AG04449 (cell line): ENCODE measurements at regions of chr3 and their contacts with region 1.

Region 1: GRCh38 chr3:168165390-168166269 is 69.9 kb upstream of the GOLIM4 start:
- DNase-seq: peak; percentile 23
- H3K4me3 ChIP-seq: no peak overlapping the region
- CTCF ChIP-seq: peak; percentile 66

Region 2: GRCh38 chr3:168040607-168041208 is 124.9 kb before region 1 on chr3:
- CTCF ChIA-PET with region 1: interaction called, 276 read pairs
- POLR2A ChIA-PET with region 1: no interaction called
- DNase-seq: peak; percentile 36
- H3K4me3 ChIP-seq: no peak overlapping the region
- CTCF ChIP-seq: peak; percentile 64

Region 3: DNA sequence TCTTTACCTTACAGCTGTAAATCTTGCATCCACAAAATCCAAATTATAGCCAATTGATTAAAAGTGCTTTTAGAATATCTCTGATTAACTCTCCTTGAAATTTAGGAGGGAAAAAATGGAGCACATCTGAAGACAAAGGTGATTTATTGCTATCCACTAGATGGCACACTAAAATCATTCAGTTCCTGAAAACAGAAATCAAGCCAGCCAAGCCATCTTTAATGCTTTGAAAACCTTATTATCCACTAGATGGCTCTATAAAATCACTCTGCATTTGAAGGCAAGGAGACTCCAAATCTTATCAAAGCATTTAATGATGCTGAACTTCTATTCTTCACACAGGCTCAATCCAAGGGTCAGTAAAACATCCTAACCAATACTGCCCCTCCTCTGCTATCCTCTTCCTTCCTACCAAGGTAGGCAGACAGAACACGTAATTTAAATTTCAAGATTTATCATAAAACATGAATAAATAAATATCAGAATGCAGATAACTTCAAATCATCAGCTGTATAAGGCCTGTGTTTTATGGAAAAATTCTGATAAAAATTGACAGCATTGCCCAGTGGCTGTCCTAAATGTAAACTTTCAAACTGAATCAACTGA is 118.3 kb before region 1 on chr3:
- CTCF ChIA-PET with region 1: interaction called, 276 read pairs
- POLR2A ChIA-PET with region 1: no interaction called
- DNase-seq: no peak
- H3K4me3 ChIP-seq: no peak overlapping the region
- CTCF ChIP-seq: peak; percentile 49

Region 4: DNA sequence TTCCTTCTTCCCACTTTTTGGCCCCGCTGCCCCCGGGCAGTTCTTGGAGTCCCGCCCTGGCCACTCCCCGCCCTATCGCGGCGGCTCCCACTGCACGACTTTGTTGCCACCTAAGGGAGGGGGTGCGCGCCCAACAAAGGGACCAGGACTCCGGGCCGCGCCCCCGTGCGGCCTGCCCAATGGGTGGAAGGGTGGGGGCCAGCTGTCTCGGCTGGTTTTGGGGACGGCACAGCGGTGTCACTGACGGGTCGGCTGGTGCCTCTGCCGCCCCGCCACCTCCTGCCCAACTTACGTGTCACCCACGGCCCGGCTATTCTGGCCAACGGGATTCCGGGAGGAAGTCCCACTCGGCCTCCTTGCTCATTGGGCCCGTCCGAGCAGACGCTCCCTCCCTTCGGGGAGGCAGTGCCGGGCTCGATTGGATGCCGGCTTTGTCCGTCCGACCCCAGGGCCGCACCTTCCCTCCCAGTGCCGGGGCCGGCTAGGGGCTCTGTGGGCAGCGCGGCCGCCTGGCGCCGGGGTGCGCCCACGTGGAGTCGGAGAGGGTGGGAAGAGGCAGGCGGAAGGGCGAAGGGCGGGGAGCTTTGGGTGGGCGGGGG is 69.9 kb before region 1 on chr3 and contains the start of gene GOLIM4:
- CTCF ChIA-PET with region 1: interaction called, 20 read pairs
- POLR2A ChIA-PET with region 1: no interaction called
- DNase-seq: peak; percentile 85
- H3K4me3 ChIP-seq: peak within 1 kb of the TSS; percentile 96
- CTCF ChIP-seq: peak; percentile 7

Region 5: GRCh38 chr3:168100777-168101492 is 64.7 kb before region 1 on chr3:
- CTCF ChIA-PET with region 1: interaction called, 20 read pairs
- POLR2A ChIA-PET with region 1: no interaction called
- DNase-seq: no peak
- H3K4me3 ChIP-seq: no peak overlapping the region
- CTCF ChIP-seq: no peak

Region 6: GRCh38 chr3:168186293-168186983 is 20.8 kb after region 1 on chr3:
- CTCF ChIA-PET with region 1: interaction called, 18 read pairs
- POLR2A ChIA-PET with region 1: no interaction called
- DNase-seq: no peak
- H3K4me3 ChIP-seq: no peak overlapping the region
- CTCF ChIP-seq: no peak